Right cardiac atrium (tissue), 5 donors: ENCODE measurements at regions of chr6 and their contacts with region 1.

Region 1: DNA sequence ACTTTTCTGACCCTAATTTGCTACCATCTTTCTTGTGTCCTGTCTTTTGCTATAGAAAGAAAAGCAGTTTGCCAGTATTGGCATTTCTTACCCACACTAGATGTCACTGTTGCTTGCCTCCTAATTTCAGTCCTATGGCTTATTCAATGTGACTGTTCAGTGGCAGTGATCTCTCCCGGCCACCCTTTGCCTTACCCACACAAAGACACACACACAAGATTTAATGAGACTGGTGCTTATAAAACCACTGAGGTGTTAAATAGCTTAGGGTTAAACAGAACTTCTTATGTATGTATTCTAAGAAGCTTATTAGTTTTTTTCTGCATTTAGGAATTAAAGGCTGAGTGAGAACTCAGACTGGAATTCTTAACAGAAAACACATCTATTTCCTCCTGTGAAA is 233.6 kb upstream of the ASCC3 start:
- DNase-seq: no peak
- ATAC-seq: peak in 1 of 2 donors; percentile 67
- H3K4me3 ChIP-seq: no peak overlapping the region
- H3K27ac ChIP-seq: no peak overlapping the region
- H3K4me1 ChIP-seq: no peaks in the 10 kb centered on the region
- H3K27me3 ChIP-seq: no peaks in the 10 kb centered on the region

Region 2: GRCh38 chr6:101226626-101227165 is 112.0 kb after region 1 on chr6:
- intact Hi-C with region 1: loop called in 1 of 4 experiments (anchors 5 kb)
- DNase-seq: peak in 2 of 3 donors; percentile 20 to 39
- ATAC-seq: no peak
- H3K4me3 ChIP-seq: no peak overlapping the region
- H3K27ac ChIP-seq: no peak overlapping the region
- H3K4me1 ChIP-seq: no peaks in the 10 kb centered on the region
- H3K27me3 ChIP-seq: no peaks in the 10 kb centered on the region

Region 3: GRCh38 chr6:102619585-102619984 is 1504.9 kb after region 1 on chr6:
- intact Hi-C with region 1: loop called in 1 of 4 experiments (anchors 10 kb)
- DNase-seq: no peak
- ATAC-seq: no peak
- H3K4me3 ChIP-seq: no peak overlapping the region
- H3K27ac ChIP-seq: no peak overlapping the region
- H3K4me1 ChIP-seq: no peaks in the 10 kb centered on the region
- H3K27me3 ChIP-seq: no peaks in the 10 kb centered on the region